AG04449 (cell line): ENCODE measurements at regions of chr17 and their contacts with region 1.

Region 1: DNA sequence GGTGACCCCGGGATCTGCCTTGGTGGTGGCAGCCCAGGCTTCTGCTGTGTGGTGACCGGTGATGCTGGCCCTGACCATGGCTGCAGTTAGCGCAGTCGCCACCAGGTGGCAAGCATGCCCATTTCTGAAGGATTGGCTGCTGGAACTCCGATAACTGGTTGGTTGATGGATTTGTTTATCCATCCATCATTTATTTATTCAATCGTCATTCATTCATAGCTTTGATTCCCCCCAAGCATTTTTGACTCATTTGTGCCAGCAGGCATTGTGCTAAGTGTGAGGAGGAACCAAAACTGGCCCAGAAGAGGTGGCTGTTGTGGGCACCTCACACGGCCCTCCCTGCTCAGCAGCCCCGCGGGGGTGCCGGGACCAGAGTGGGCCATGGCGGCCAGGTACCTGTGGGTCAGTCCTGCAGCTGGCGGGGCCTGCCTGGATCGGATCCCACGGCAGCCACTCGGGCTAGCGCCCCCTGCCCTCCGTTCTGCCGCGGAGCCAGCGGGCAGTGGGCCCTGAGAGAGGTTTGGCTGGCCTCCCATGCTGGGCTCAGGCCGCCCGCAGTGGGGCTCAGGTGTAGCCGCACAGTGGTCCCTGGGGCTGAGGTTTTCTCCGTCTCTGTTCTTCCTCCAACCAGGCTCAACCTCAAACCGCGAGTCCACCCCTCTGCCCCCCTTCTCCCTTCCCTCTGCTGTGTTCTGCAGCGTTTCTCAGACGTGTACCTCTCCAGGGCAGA is 28.8 kb upstream of the ITGA3 start:
- DNase-seq: no peak
- H3K4me3 ChIP-seq: peak overlapping the region; percentile 51
- CTCF ChIP-seq: peak; percentile 95

Region 2: GRCh38 chr17:50015146-50015545 is 11.9 kb before region 1 on chr17:
- CTCF ChIA-PET with region 1: interaction called, 16 read pairs
- POLR2A ChIA-PET with region 1: no interaction called
- DNase-seq: no peak
- H3K4me3 ChIP-seq: no peak overlapping the region
- CTCF ChIP-seq: no peak

Region 3: DNA sequence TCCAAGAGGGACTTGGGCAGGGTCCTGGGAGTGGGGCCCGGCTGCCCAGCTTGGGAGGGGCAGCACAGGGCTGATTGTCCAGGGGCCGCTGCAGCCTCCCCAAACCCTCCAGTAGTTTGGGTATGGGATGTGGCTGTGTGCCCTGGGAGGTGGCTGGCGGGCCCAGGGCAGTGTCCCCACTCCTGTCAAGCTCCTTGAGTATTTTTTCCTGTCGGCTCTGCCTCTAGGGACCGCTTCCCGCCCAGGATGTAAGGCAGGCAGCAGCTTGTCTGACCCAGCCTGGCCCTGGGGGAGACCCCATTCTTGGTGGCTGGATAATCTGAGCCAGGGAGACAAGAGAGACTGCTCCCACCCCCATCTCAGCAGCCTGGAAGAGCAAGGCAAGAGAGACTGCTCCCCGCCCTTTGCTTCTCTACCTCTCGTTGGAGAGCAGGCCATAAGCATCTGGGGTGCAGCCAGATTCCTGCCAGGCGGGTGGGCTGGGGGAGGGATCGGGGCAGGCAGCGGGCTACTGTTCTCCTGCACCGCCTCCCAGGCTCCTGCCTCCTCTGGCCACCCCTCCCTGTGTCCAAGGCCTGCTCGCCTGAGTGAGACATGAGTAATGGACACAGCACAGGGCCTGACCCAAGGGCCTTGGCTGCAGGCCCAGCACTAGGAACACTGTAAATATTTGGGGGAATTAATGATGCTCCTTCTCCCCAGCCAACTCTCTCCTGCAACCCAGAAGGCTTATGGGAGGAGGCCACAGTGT is 10.4 kb after region 1 on chr17:
- CTCF ChIA-PET with region 1: interaction called, 24 read pairs
- POLR2A ChIA-PET with region 1: no interaction called
- DNase-seq: no peak
- H3K4me3 ChIP-seq: no peak overlapping the region
- CTCF ChIP-seq: no peak

Region 4: DNA sequence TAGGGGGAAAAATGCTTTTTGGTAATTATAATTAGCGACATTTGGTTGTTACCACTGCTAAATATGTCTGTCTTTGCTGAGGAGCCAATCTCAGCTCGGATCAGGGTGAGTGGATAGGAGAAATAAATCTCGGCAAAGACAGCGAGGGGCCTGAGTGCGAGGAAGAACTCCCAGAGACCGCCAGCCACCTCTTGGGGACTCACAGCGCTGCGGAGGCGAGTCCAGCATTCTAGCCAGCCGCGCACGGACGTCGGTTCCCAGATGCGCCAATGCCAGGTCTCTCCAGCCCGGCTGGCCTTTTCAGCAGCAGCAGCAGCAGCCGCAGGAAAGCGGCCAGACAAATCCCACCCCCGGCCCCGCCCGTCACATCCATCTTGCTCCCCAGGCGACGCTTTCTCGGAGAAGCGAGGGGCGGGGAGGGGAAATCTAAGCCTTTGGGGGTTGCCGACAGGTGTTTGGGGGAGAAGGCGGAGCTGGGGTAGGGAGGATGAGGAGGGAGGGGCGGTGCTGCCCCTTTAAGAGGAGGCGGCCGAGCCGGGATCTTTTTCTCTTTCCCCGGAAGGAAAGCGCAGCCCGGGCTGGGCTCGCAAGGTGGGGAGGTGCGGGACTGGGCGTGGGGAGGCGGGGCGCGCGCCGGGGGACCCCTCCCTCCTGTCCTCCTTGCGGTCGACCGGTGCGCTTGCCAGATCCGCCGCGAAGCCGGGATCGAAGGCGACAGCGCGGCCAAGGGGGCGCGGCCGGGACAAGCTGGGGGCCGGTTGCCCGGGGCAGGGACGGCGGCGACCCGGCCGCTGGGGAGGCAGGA is 28.6 kb after region 1 on chr17 and contains the start of gene ITGA3:
- CTCF ChIA-PET with region 1: interaction called, 179 read pairs
- POLR2A ChIA-PET with region 1: interaction called, 20 read pairs
- DNase-seq: no peak
- H3K4me3 ChIP-seq: peak within 1 kb of the TSS; percentile 78
- CTCF ChIP-seq: no peak

Region 5: GRCh38 chr17:50064258-50065001 is 37.4 kb after region 1 on chr17:
- CTCF ChIA-PET with region 1: interaction called, 179 read pairs
- POLR2A ChIA-PET with region 1: interaction called, 17 read pairs
- DNase-seq: peak; percentile 94
- H3K4me3 ChIP-seq: no peak overlapping the region
- CTCF ChIP-seq: no peak

Region 6: GRCh38 chr17:50079334-50080095 is 52.4 kb after region 1 on chr17:
- CTCF ChIA-PET with region 1: interaction called, 91 read pairs
- POLR2A ChIA-PET with region 1: no interaction called
- DNase-seq: no peak
- H3K4me3 ChIP-seq: no peak overlapping the region
- CTCF ChIP-seq: peak; percentile 78

Region 7: GRCh38 chr17:50258647-50259476 is 231.8 kb after region 1 on chr17:
- CTCF ChIA-PET with region 1: no interaction called
- POLR2A ChIA-PET with region 1: no interaction called
- DNase-seq: no peak
- H3K4me3 ChIP-seq: no peak overlapping the region
- CTCF ChIP-seq: no peak